Activated CD4-positive, alpha-beta memory T cell treated with anti-CD3 and anti-CD28 coated beads for 36 hours (primary cell): ENCODE measurements at regions of chr19 and their contacts with region 1.

Region 1: GRCh38 chr19:1213391-1214286 is 8.1 kb downstream of the STK11 start:
- DNase-seq: peak; percentile 85
- H3K4me3 Mint-ChIP-seq: peak overlapping the region; percentile 77
- H3K27ac Mint-ChIP-seq: peak overlapping the region; percentile 97
- H3K4me1 Mint-ChIP-seq: peaks cover 29% of the 10 kb centered on the region
- H3K27me3 Mint-ChIP-seq: no peaks in the 10 kb centered on the region

Region 2: GRCh38 chr19:1113033-1113985 is 100.3 kb before region 1 on chr19:
- CTCF ChIA-PET with region 1: interaction called, 11 read pairs
- POLR2A ChIA-PET with region 1: no interaction called
- intact Hi-C with region 1: no loop called
- DNase-seq: peak; percentile 89
- H3K4me3 Mint-ChIP-seq: no peak overlapping the region
- H3K27ac Mint-ChIP-seq: no peak overlapping the region
- H3K4me1 Mint-ChIP-seq: peaks cover 2% of the 10 kb centered on the region
- H3K27me3 Mint-ChIP-seq: no peaks in the 10 kb centered on the region